ENCODE measurements at regions of chr13 and their contacts with region 1.

Region 1: DNA sequence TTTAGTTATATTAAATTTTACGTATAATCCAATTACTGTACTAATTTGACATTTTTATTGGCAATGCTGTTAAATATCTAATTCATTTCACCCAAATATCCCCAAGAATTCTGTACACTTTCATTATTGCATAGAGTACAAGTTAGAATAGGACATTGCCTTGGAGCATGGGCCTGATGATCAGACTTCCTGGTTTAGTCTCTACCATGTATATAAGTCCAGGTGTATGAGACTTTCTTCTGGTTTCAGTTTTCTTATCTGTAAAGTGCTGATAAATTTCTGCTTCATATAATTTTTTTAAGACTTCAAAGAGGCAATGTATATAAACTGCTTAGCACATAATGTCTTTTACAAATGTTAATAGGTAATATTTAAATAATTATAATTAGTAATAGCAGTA is 179.4 kb downstream of the KLF12 start:
- DNase-seq: no peak
- H3K4me3 ChIP-seq: no peak overlapping the region
- H3K27ac ChIP-seq: no peak overlapping the region
- H3K4me1 ChIP-seq: peaks cover 32% of the 10 kb centered on the region
- H3K27me3 ChIP-seq: no peaks in the 10 kb centered on the region
- CTCF ChIP-seq: no peak

Region 2: DNA sequence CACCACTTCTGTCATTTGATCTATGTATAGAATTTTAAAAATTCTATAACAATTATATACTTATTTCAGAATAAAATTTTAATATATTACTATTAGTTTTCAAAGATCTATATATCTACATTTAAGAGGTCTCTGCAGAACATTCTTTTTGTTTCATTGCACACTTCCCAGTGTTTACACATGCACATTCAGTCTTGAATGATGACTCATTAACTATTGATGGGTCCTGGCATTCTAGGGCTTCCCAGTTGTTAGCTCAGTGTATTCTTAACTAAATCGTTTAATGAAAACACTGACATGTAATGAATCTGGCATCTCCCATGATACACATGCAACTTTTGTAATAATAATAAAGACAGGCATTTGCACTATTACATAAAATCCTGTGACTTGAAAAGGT is 145.2 kb before region 1 on chr13:
- intact Hi-C with region 1: no loop called
- DNase-seq: no peak
- H3K4me3 ChIP-seq: no peak overlapping the region
- H3K27ac ChIP-seq: no peak overlapping the region
- H3K4me1 ChIP-seq: peaks cover 23% of the 10 kb centered on the region
- H3K27me3 ChIP-seq: no peaks in the 10 kb centered on the region
- CTCF ChIP-seq: no peak

Region 3: DNA sequence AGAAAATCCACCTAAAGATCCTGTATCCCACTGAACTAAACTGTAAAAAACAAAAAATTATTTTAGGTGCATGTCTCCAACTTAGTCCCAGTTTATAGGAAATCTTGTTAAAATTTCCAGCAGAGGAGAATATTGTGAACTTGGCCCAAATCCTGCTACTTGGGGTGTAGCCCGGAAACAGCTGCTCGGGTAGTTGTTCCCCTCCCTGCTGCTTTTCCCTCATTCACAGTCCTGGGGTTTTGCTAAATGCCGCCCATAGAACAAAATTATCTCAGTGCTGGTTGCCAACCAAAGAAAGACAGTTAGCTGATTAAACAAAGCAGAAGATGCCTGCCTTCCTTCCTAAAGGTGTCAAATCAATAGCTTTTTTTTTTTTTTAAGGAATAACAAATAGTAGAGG is 509.9 kb after region 1 on chr13:
- intact Hi-C with region 1: loop called (anchors 10 kb)
- DNase-seq: peak; percentile 16
- H3K4me3 ChIP-seq: no peak overlapping the region
- H3K27ac ChIP-seq: no peak overlapping the region
- H3K4me1 ChIP-seq: peaks cover 6% of the 10 kb centered on the region
- H3K27me3 ChIP-seq: no peaks in the 10 kb centered on the region
- CTCF ChIP-seq: no peak